Activated CD8-positive, alpha-beta T cell treated with anti-CD3 and anti-CD28 coated beads, Interleukin-2, amount 10 ng/mL, durations not matched to agents 7 days and 5 days (primary cell): ENCODE measurements at regions of chr3 and their contacts with region 1.

Region 1: GRCh38 chr3:46208167-46208704 is at the start of gene CCR1:
- DNase-seq: peak; percentile 85
- ATAC-seq: peak; percentile 69
- H3K4me3 Mint-ChIP-seq: peak within 1 kb of the TSS; percentile 87
- H3K27ac Mint-ChIP-seq: peak within 1 kb of the TSS; percentile 95
- H3K4me1 Mint-ChIP-seq: peaks cover 73% of the 10 kb centered on the region
- H3K27me3 Mint-ChIP-seq: no peaks in the 10 kb centered on the region
- total RNA-seq, gene CCR1: 41.4 to 41.5 TPM

Region 2: GRCh38 chr3:45938864-45939263 is 269.4 kb before region 1 on chr3:
- CTCF ChIA-PET with region 1: interaction called, 16 read pairs
- POLR2A ChIA-PET with region 1: interaction called, 3 read pairs
- DNase-seq: peak; percentile 94
- ATAC-seq: peak; percentile 75
- H3K4me3 Mint-ChIP-seq: no peak overlapping the region
- H3K27ac Mint-ChIP-seq: peak overlapping the region; percentile 56
- H3K4me1 Mint-ChIP-seq: peaks cover 65% of the 10 kb centered on the region
- H3K27me3 Mint-ChIP-seq: no peaks in the 10 kb centered on the region

Region 3: DNA sequence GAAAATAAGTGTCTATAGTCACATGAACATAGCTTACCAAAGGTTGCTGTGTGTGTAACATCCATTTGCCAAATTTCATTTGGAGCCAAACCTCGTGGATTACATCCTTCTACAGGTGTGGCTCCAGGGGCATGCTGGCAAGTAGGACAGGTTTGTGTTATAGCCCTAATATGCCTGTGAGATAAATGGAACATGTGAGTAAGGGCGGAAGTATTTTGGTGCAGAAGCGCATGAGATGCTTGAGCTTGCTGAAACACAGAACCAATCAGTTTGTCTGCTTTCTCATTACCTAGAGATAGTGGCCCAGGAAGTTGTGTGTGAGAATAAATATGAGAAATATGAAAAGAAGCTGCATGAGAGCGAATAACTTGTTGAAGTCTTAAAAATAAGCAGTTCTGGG is 159.1 kb before region 1 on chr3:
- CTCF ChIA-PET with region 1: no interaction called
- POLR2A ChIA-PET with region 1: no interaction called
- DNase-seq: no peak
- ATAC-seq: no peak
- H3K4me3 Mint-ChIP-seq: no peak overlapping the region
- H3K27ac Mint-ChIP-seq: no peak overlapping the region
- H3K4me1 Mint-ChIP-seq: peaks cover 43% of the 10 kb centered on the region
- H3K27me3 Mint-ChIP-seq: peaks cover 32% of the 10 kb centered on the region

Region 4: DNA sequence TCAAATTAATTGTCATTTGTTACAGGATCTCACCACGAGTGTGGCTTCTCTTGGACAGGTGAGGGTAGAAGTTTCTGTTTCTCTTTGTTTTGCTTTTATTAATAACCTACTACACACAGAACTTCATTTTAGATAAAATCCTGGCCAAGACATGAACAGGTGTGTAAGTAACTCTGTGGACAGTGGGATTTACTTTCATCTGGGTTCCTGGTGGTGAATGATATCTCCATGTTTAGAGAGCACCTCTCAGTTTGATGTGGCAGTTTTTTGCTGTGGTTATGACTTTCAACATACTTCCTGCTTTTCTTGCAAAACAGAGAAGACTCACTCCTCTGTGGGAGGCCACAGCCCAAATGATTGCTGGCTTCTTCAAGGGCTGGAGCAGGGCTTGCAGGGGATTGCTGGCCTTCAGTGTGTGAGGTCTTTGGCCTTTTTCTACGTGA is 109.9 kb before region 1 on chr3:
- CTCF ChIA-PET with region 1: interaction called, 150 read pairs
- POLR2A ChIA-PET with region 1: interaction called, 13 read pairs
- DNase-seq: peak; percentile 80
- ATAC-seq: peak; percentile 72
- H3K4me3 Mint-ChIP-seq: peak overlapping the region; percentile 63
- H3K27ac Mint-ChIP-seq: peak overlapping the region; percentile 99
- H3K4me1 Mint-ChIP-seq: peaks cover 92% of the 10 kb centered on the region
- H3K27me3 Mint-ChIP-seq: no peaks in the 10 kb centered on the region

Region 5: GRCh38 chr3:46186471-46187340 is 21.5 kb before region 1 on chr3:
- CTCF ChIA-PET with region 1: interaction called, 10 read pairs
- POLR2A ChIA-PET with region 1: no interaction called
- DNase-seq: no peak
- ATAC-seq: peak; percentile 82
- H3K4me3 Mint-ChIP-seq: peak overlapping the region; percentile 2
- H3K27ac Mint-ChIP-seq: peak overlapping the region; percentile 72
- H3K4me1 Mint-ChIP-seq: peaks cover 46% of the 10 kb centered on the region
- H3K27me3 Mint-ChIP-seq: peaks cover 2% of the 10 kb centered on the region

Region 6: GRCh38 chr3:46349485-46350261 is 141.4 kb after region 1 on chr3:
- CTCF ChIA-PET with region 1: interaction called, 14 read pairs
- POLR2A ChIA-PET with region 1: interaction called, 5 read pairs
- DNase-seq: peak; percentile 68
- ATAC-seq: peak; percentile 54
- H3K4me3 Mint-ChIP-seq: peak overlapping the region; percentile 59
- H3K27ac Mint-ChIP-seq: peak overlapping the region; percentile 91
- H3K4me1 Mint-ChIP-seq: peaks cover 80% of the 10 kb centered on the region
- H3K27me3 Mint-ChIP-seq: no peaks in the 10 kb centered on the region

Region 7: GRCh38 chr3:46469680-46470357 is 261.6 kb after region 1 on chr3:
- CTCF ChIA-PET with region 1: no interaction called
- POLR2A ChIA-PET with region 1: no interaction called
- DNase-seq: no peak
- ATAC-seq: no peak
- H3K4me3 Mint-ChIP-seq: no peak overlapping the region
- H3K27ac Mint-ChIP-seq: no peak overlapping the region
- H3K4me1 Mint-ChIP-seq: peaks cover 2% of the 10 kb centered on the region
- H3K27me3 Mint-ChIP-seq: peaks cover 44% of the 10 kb centered on the region